ENCODE measurements at regions of chr15 and their contacts with region 1.

Region 1: DNA sequence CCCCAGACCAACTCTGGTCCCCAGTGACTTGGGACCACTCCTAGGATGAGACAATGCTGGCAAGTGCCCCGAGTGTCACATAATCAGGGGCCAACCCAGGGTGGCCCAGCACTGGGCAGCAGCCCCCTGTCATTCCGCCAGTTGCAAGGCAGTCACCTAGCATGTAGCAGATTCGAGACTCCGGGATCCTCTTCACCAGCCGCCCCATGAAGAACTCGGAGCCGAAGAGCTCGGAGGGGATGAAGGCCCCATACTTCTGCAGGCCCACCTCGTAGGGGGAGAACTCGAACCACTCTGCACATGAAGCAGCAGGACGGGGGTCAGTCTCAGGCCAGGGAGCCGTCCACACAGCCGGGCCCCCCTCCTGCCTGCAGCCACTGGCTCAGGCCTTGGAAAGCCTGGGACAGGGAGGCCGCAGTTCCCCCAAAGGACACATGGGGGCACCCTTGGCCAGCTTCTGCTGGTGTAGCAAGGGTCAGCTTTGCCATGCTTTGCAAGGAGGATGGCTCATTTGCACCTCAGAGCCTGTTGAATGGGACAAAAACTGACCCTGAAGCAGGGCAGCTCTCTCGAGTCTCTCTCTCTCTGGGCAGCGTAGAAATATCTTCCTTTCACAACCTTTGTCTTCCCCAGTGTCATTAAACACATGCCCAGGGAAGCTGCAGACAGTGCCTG is 17.0 kb upstream of the EHD4 start:
- DNase-seq: peak; percentile 78 to 94 (median 87)
- H3K4me3 ChIP-seq: no peak overlapping the region
- H3K27ac ChIP-seq: no peak overlapping the region
- H3K4me1 ChIP-seq: no peaks in the 10 kb centered on the region
- H3K27me3 ChIP-seq: no peaks in the 10 kb centered on the region
- CTCF ChIP-seq: peak; percentile 94 to 98 (median 96)
- POLR2A ChIP-seq: no peak

Region 2: DNA sequence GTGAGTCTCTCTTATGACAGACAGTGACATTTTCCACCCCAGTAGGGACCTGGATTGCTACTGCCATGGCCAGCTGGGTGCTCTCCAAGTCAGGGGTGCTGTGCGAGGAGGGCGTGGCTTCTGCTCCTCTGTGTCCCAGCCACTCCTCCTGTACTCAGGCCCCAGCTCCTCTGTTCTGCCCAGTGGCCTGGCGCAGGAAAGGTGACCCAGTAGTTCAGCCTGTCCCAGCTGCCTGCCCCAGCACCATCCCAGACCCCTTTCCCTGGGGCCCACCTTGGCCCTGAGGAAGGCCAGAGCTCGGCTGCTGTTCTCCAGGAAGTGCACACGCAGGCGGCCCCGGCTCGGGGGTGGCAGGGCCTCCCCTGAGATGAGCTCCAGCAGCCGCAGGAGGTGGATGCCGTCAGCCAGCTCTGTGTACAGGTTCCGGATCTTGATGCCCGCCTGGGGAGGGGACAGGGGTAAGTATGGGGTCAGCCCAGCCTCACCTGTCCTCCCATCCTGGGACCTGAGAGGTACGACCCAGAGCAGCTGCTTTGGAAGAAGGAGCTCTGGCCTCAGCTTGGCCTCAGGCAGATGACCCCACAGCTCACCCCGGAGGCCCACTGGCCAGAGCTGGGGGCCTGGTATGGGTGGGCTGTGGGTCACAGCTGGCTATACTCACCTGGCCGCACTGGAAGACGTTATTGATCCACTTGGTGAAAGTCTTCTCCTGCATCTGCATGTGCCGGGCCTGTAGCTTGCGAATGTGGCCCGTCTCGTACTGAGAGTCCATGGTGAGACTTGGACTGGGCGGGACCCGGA is 96.6 kb before region 1 on chr15:
- intact Hi-C with region 1: no loop called
- DNase-seq: peak; percentile 80 to 93 (median 91)
- H3K4me3 ChIP-seq: no peak overlapping the region
- H3K27ac ChIP-seq: no peak overlapping the region
- H3K4me1 ChIP-seq: peaks cover 12 to 18% of the 10 kb centered on the region in 2 donors
- H3K27me3 ChIP-seq: no peaks in the 10 kb centered on the region
- CTCF ChIP-seq: no peak
- POLR2A ChIP-seq: no peak

Region 3: DNA sequence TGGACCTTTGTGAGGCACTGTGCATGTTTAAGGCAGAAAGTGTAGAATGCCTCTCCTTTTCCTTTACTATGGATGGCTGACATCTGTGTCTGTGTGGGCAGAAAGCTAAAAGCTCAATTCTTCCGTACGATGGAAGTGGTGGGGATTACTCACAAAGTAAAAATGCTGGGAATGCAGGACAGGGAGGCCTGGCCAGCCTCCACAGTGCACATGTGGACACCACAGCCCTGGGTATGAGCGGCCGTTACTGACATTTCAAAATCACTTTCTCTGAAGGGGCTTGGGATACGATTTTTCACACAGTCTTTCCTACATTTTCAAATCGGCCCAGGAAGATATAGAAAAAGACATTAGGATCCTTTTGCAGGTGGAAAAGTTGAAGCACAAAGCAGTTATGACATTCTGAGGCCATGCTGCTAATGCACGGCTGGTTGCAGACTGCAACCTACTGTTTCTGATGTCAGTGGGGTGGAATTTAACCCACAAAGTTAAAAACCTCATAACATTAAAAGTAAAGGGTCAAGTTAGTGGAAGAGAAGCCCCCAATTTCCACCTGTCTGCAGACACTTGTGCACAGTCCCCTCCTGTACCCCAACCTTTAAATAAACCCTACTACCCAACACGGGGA is 45.0 kb before region 1 on chr15:
- intact Hi-C with region 1: no loop called
- DNase-seq: peak in 6 of 7 donors; percentile 59 to 87 (median 80)
- H3K4me3 ChIP-seq: no peak overlapping the region
- H3K27ac ChIP-seq: peak overlapping the region in 2 of 5 donors; percentile 28 to 75
- H3K4me1 ChIP-seq: peaks cover 12 to 16% of the 10 kb centered on the region in 2 donors
- H3K27me3 ChIP-seq: no peaks in the 10 kb centered on the region
- CTCF ChIP-seq: no peak
- POLR2A ChIP-seq: no peak

Region 4: GRCh38 chr15:42059661-42060476 is 70.5 kb after region 1 on chr15:
- intact Hi-C with region 1: loop called (anchors 2 to 5 kb)
- DNase-seq: peak in 6 of 7 donors; percentile 43 to 78 (median 61)
- H3K4me3 ChIP-seq: no peak overlapping the region
- H3K27ac ChIP-seq: no peak overlapping the region
- H3K4me1 ChIP-seq: peaks cover 0 to 6% of the 10 kb centered on the region in 2 donors
- H3K27me3 ChIP-seq: no peaks in the 10 kb centered on the region
- CTCF ChIP-seq: peak; percentile 82 to 90 (median 84)
- POLR2A ChIP-seq: no peak

Measured in adrenal gland (tissue), 19 donors.